HAP-1 (cell line): ENCODE measurements at regions of chr3 and their contacts with region 1.

Region 1: DNA sequence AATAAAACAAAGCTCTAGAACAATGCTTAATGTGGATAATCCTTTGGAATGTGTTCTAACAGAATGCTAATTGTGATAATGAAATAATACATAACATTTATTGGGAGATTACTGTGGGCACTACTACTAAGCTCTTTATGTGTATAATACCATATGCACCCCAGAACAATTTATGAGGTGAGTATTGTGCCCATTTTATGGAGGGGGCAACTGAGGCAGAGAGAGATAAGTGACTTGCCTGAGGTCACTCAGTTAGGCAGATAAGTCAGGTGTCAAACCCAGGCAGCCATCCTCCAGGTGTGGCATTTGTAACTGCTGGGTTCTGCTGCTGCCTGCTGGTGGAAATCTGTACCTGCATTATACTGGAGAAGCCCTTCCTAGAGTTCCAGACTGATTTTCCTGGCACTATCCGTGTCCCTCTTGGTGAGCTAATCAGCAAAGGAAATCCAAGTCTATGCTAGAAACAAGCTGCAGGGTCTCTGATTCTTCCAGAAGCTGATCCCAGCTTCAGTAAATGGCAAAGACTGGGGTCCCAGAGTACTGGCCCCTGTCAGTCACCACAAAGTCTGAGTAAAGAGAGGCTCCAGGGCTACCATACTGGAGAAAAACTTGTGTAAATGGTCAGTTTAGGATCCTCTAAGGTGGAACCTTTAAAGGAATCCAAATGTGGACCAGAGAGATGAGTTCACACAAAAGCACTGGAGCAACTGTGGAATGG is 22.6 kb upstream of the RBP1 start:
- DNase-seq: peak; percentile 36 to 68
- H3K4me3 ChIP-seq: no peak overlapping the region
- H3K4me1 ChIP-seq: peaks cover 6% of the 10 kb centered on the region; the same call in 1 of the 2 replicates
- H3K27me3 ChIP-seq: no peaks in the 10 kb centered on the region

Region 2: DNA sequence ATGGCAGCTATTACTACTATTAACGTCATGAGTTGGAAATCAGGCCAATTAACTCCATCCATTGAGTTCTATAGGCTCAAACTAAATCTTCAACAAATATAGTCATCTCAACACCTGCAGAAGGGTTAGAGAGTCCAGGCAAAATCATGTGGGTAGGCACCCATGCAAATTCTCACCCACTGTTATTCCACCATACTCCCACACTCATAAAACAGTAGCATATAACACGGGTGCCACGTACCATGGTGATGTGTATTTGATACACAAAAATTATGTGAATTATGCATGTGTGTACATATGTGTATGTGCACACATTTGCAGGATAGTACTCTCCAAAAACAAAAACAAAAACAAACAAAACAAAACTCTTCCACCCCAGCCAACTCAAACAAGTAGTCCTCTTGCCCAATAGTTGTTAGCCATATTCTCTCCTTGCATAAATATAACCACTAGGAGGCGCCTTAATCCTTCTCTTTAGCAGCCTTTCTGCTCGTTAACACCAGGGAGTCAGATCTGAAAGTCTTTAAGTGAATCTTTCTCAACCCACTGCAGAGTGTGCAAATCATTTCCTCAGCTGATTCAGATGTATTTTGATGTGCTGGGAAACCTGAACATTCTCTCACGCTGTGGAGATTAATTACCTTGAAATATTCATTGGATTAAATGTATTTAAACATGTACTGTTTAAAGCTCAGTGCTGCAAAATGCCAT is 134.7 kb before region 1 on chr3:
- in situ Hi-C with region 1: loop called (anchors 5 kb)
- DNase-seq: peak; percentile 29 to 72
- H3K4me3 ChIP-seq: no peak overlapping the region
- H3K4me1 ChIP-seq: no peaks in the 10 kb centered on the region
- H3K27me3 ChIP-seq: no peaks in the 10 kb centered on the region